Heart right ventricle (tissue), 16 donors: ENCODE measurements at regions of chr5 and their contacts with region 1.

Region 1: GRCh38 chr5:43602461-43603343 is at the start of gene NNT:
- DNase-seq: peak; percentile 77 to 84
- ATAC-seq: peak; percentile 78 to 90 (median 84)
- H3K4me3 ChIP-seq: peak within 1 kb of the TSS; percentile 50 to 93 (median 74)
- H3K27ac ChIP-seq: peak within 1 kb of the TSS; percentile 93 to 99 (median 96)
- H3K4me1 ChIP-seq: peaks cover 0 to 61% (median 37%) of the 10 kb centered on the region in 9 donors
- H3K27me3 ChIP-seq: no peaks in the 10 kb centered on the region
- CTCF ChIP-seq: no peak
- total RNA-seq, gene NNT: 383 to 731 (median 639) TPM

Region 2: DNA sequence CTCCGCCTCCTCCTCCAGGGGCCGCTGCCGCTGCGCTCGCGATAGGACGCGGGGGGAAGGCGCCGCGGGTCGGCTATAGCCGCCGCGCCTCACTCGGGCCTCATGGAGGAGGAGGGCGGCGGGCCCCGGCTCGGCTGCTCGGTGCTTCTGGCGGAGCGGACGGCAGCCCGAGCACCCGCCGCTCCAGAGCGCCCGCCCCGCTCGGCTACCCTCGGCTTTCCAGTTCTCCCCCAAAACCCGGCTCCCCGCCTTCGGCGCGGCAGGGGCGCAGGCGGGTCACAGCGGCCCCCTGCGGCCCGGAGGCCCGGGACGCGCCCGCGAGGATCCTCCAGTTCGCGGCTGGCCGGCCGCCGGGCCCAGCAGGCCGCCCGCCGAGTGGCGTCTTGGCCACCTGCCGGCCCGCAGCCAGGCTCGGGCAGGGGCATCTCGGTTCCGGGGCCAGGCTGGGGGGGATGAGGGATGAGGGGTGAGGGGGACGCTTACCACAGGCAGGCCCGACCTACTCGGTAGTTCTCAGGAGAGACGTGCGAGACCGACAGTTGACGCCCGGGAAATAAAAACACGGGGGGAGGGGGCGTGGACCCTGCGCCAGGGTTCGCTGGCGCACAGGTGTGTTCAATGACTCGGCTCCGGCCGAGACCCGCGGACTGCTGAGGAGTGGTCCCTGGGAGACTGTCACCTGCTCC is 45.7 kb before region 1 on chr5 and contains the start of gene PAIP1:
- intact Hi-C with region 1: loop called in 9 of 10 experiments (anchors 2 to 10 kb)
- DNase-seq: peak; percentile 85 to 87
- ATAC-seq: peak; percentile 81 to 94 (median 91)
- H3K4me3 ChIP-seq: peak within 1 kb of the TSS; percentile 70 to 94 (median 84)
- H3K27ac ChIP-seq: peak within 1 kb of the TSS; percentile 93 to 99 (median 98)
- H3K4me1 ChIP-seq: peaks cover 0 to 48% (median 40%) of the 10 kb centered on the region in 9 donors
- H3K27me3 ChIP-seq: no peaks in the 10 kb centered on the region
- CTCF ChIP-seq: peak; percentile 50 to 91 (median 70)
- total RNA-seq, gene PAIP1: 112 to 162 (median 138) TPM